ENCODE measurements at regions of chr22 and their contacts with region 1.

Region 1: DNA sequence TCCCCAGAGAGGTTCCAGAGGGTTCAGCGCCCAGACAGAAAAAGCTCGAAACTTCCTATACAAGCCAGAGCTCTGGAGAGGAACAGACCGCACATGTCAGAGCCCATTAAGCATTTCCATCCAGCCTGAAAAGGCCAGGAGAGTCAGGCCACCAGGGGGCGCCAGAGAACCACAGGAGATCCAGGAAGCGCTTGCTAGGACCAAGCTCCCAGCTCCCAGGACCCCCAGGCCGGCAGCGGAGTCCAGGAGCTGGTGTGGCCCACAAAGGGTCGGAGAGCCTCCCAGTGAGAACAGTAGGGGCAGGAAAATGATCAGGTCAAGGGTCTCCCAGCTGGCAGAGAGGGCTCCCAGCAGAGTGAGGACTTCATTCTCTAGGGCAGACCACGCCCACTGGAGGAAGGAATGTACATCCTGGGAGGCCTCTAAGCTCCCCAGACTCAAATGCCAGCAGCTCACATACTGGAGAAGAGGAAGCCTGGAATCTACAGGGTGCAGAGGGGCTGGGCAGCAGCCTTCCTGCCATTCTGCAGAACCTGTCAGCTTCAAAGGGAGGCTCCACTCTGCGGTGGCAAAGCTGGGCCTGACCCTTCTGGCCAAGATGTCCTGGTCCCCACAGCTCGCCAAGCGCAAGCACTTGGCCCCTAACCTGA is 2.1 kb upstream of the MEI1 start:
- DNase-seq: peak; percentile 85
- H3K4me3 ChIP-seq: peak overlapping the region in 1 of 2 experiments; percentile 43; a peak in 1 of 4 replicates
- H3K27ac ChIP-seq: no peak overlapping the region; a peak in 2 of 4 replicates
- H3K4me1 ChIP-seq: peaks cover 0 to 4% of the 10 kb centered on the region in 2 experiments; a peak in 1 of 4 replicates
- H3K27me3 ChIP-seq: no peaks in the 10 kb centered on the region
- CTCF ChIP-seq: peak; percentile 83
- EP300 ChIP-seq: no peak
- RAD21 ChIP-seq: peak; percentile 77

Region 2: GRCh38 chr22:41256254-41256897 is 440.9 kb before region 1 on chr22:
- CTCF ChIA-PET with region 1: no interaction called
- POLR2A ChIA-PET with region 1: no interaction called
- DNase-seq: no peak
- H3K4me3 ChIP-seq: no peak overlapping the region
- H3K27ac ChIP-seq: no peak overlapping the region
- H3K4me1 ChIP-seq: no peaks in the 10 kb centered on the region
- H3K27me3 ChIP-seq: no peaks in the 10 kb centered on the region
- CTCF ChIP-seq: no peak
- EP300 ChIP-seq: no peak
- RAD21 ChIP-seq: no peak

Region 3: DNA sequence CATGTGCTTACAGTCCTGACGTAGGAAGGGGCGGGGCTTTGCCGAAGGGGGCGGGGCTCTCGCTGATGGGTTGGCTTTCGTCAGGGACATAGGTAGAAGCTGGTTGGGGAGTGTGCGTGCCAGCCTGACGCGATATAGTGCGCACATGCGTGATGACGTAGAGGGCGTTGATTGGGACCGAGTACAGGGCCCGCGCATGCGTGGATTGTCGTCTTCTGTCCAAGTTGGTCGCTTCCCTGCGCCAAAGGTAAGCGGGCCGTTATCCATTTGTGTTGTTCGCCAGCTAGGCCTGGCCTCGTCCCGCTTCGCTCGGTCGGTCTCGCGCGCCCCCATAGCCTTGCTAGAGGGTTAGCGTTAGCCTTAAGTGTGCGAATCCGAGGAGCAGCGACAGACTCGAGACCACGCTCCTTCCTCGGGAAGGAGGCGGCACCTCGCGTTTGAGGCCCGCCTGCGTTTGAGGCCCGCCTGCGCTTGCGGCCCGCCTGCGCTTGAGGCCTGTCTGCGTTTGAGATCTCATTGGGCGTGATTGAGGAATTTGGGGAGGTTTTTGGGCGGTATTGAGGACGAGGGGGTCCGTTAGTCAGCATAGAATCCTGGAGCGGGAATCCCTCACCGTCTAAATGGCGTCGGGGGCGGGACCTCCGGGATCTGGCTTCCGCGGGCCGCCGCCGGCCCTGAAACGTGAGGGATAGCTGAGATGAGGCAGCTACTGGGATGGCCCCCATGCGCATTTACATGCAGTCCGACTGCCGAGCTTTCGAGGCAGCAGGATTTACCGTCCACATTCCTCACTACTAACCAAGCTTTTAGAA is 75.9 kb before region 1 on chr22 and contains the start of gene XRCC6:
- CTCF ChIA-PET with region 1: no interaction called
- POLR2A ChIA-PET with region 1: no interaction called
- DNase-seq: peak; percentile 96
- H3K4me3 ChIP-seq: peak within 1 kb of the TSS; percentile 78 to 89
- H3K27ac ChIP-seq: peak within 1 kb of the TSS; percentile 82 to 97
- H3K4me1 ChIP-seq: peaks cover 5% of the 10 kb centered on the region in 2 experiments; a peak in 3 of 4 replicates
- H3K27me3 ChIP-seq: no peaks in the 10 kb centered on the region
- CTCF ChIP-seq: no peak
- EP300 ChIP-seq: no peak
- RAD21 ChIP-seq: no peak
- polyA plus RNA-seq, gene XRCC6: 78.1 and 79.0 TPM in 2 replicates

Region 4: DNA sequence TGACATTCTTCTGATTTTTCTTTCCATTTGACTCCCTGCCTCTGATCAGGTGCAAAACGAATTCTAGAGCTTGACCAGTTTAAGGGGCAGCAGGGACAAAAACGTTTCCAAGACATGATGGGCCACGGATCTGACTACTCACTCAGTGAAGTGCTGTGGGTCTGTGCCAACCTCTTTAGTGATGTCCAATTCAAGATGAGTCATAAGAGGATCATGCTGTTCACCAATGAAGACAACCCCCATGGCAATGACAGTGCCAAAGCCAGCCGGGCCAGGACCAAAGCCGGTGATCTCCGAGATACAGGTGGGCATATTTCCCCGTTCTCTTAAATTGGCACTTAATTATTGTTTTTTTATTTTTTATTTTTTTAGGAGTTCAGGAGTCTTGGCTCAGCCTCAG is 60.8 kb before region 1 on chr22:
- CTCF ChIA-PET with region 1: no interaction called
- POLR2A ChIA-PET with region 1: no interaction called
- DNase-seq: no peak
- H3K4me3 ChIP-seq: no peak overlapping the region
- H3K27ac ChIP-seq: peak overlapping the region in 1 of 2 experiments; percentile 56; a peak in 1 of 4 replicates
- H3K4me1 ChIP-seq: no peaks in the 10 kb centered on the region
- H3K27me3 ChIP-seq: no peaks in the 10 kb centered on the region
- CTCF ChIP-seq: no peak
- EP300 ChIP-seq: no peak
- RAD21 ChIP-seq: no peak

Region 5: DNA sequence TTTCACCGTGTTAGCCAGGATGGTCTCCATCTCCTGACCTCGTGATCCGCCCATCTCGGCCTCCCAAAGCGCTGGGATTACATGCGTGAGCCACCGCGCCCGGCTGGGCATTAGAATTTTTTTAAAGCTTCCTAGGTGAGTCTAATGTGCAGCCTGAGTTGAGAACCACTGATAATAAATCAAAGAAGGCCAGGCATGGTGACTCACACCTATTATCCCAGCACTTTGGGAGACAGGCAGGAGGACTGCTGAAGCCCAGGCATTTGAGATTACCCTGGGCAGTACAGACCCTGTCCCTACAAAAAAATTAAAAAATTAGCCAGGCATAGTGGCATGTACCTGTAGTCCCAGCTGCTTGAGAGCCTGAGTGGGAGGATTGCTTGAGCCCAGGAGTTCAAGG is 15.8 kb after region 1 on chr22:
- CTCF ChIA-PET with region 1: interaction called, 18 read pairs
- POLR2A ChIA-PET with region 1: interaction called, 3 read pairs
- DNase-seq: no peak
- H3K4me3 ChIP-seq: no peak overlapping the region
- H3K27ac ChIP-seq: no peak overlapping the region
- H3K4me1 ChIP-seq: no peaks in the 10 kb centered on the region
- H3K27me3 ChIP-seq: no peaks in the 10 kb centered on the region
- CTCF ChIP-seq: no peak
- EP300 ChIP-seq: no peak
- RAD21 ChIP-seq: no peak

Region 6: GRCh38 chr22:41746567-41747400 is 49.5 kb after region 1 on chr22:
- CTCF ChIA-PET with region 1: interaction called, 16 read pairs
- POLR2A ChIA-PET with region 1: no interaction called
- DNase-seq: peak; percentile 55
- H3K4me3 ChIP-seq: peak overlapping the region in 1 of 2 experiments; percentile 19; a peak in 1 of 4 replicates
- H3K27ac ChIP-seq: no peak overlapping the region
- H3K4me1 ChIP-seq: no peaks in the 10 kb centered on the region
- H3K27me3 ChIP-seq: no peaks in the 10 kb centered on the region; the same call in 1 of the 2 replicates
- CTCF ChIP-seq: peak; percentile 55
- EP300 ChIP-seq: no peak
- RAD21 ChIP-seq: peak; percentile 65

Region 7: GRCh38 chr22:41800348-41801146 is 103.3 kb after region 1 on chr22 and contains the start of gene CCDC134:
- CTCF ChIA-PET with region 1: interaction called, 18 read pairs
- POLR2A ChIA-PET with region 1: interaction called, 4 read pairs
- DNase-seq: peak; percentile 93
- H3K4me3 ChIP-seq: peak within 1 kb of the TSS; percentile 71 to 72
- H3K27ac ChIP-seq: peak within 1 kb of the TSS; percentile 13 to 68; a peak in 2 of 4 replicates
- H3K4me1 ChIP-seq: peaks cover 0 to 9% of the 10 kb centered on the region in 2 experiments; a peak in 2 of 4 replicates
- H3K27me3 ChIP-seq: no peaks in the 10 kb centered on the region
- CTCF ChIP-seq: no peak
- EP300 ChIP-seq: no peak
- RAD21 ChIP-seq: no peak
- polyA plus RNA-seq, gene CCDC134: 1.8 and 2.0 TPM in 2 replicates

Region 8: DNA sequence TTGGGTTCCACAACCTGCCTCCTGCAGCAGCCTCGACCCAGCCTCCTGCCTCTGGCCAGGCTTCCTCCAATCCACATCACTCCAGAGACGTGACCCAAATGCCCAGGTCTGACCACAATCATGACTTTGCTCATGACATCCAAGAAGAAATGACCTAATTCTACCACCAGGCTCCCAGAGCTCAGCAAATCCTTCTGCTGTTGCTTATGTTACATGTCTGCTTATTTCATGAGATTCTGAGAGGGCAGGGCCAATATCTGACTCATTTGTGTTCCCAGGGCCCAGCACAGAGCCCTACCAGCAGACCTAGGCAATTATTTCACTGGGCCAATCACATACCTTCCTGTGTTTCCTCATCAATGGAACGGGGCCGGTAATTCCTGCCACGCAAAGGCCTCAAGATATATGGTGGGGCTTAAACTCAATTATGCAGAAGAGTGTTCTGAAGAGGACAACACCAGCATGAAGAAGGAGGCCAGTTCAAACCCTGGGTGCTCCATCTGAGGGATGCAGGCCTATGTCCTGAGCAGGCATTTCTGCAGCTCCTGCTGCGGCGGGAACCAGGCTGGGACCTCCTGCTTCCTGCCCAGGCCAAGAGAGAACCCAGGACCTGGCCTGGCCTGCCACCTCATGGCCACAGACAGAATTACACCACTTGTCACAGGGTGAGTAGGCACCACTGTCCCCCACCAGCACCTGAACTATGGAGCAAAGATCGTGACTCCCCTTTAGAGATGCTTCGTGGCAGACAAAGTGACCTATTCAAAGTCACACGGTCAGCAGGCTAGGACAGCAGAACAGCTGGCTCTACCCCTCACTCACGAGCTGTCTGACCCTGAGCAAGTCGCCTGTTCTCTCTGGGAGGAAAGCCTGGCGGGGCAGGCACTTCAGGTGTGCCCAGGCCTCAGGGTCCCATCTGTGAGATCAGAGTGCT is 243.8 kb after region 1 on chr22:
- CTCF ChIA-PET with region 1: interaction called, 46 read pairs
- POLR2A ChIA-PET with region 1: interaction called, 6 read pairs
- DNase-seq: peak; percentile 78
- H3K4me3 ChIP-seq: peak overlapping the region in 1 of 2 experiments; percentile 32; a peak in 1 of 4 replicates
- H3K27ac ChIP-seq: peak overlapping the region in 1 of 2 experiments; percentile 45; a peak in 2 of 4 replicates
- H3K4me1 ChIP-seq: peaks cover 0 to 11% of the 10 kb centered on the region in 2 experiments; a peak in 1 of 4 replicates
- H3K27me3 ChIP-seq: no peaks in the 10 kb centered on the region
- CTCF ChIP-seq: peak; percentile 65
- EP300 ChIP-seq: no peak
- RAD21 ChIP-seq: peak; percentile 87

Region 9: GRCh38 chr22:41946629-41947423 is 249.6 kb after region 1 on chr22 and contains the start of gene CENPM:
- CTCF ChIA-PET with region 1: interaction called, 46 read pairs
- POLR2A ChIA-PET with region 1: interaction called, 3 read pairs
- DNase-seq: peak; percentile 85
- H3K4me3 ChIP-seq: peak within 1 kb of the TSS; percentile 63 to 72
- H3K27ac ChIP-seq: peak within 1 kb of the TSS; percentile 28 to 56; a peak in 3 of 4 replicates
- H3K4me1 ChIP-seq: peaks cover 0 to 19% of the 10 kb centered on the region in 2 experiments; a peak in 1 of 4 replicates
- H3K27me3 ChIP-seq: no peaks in the 10 kb centered on the region
- CTCF ChIP-seq: no peak
- EP300 ChIP-seq: no peak
- RAD21 ChIP-seq: no peak
- polyA plus RNA-seq, gene CENPM: 8.1 and 15.6 TPM in 2 replicates

Region 10: DNA sequence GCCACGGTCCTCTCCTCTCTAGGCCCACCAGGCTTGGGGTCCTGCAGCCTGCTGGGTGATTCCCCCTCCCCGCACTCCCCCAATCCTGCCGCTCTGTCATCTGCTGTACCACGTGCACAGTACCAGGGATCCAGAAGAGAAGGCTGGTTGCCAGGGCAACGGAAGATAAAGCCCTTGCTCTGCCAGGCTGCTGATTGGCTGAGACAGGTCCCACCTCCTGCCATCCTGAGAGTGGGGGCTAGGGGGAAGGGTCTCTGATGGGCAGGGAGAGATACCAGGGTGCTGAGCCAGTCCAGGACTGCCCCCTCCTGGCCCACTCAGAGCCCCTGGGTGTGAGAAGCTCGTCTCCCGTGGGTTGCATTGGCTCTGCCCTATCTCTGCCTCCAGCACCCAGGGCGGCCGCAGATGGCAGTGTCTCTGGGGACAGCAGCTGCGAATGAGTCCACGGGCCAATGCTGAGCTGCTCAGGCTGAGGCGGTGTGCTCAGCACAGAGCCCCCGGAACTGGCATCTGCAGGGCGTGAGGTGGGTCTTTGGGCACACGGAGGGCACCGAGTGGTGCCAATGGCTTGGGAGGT is 254.7 kb after region 1 on chr22 and contains the start of gene SMIM45:
- CTCF ChIA-PET with region 1: interaction called, 17 read pairs
- POLR2A ChIA-PET with region 1: interaction called, 3 read pairs
- DNase-seq: peak; percentile 82
- H3K4me3 ChIP-seq: peak within 1 kb of the TSS in 1 of 2 experiments; percentile 34; a peak in 1 of 4 replicates
- H3K27ac ChIP-seq: peak within 1 kb of the TSS in 1 of 2 experiments; percentile 76; a peak in 2 of 4 replicates
- H3K4me1 ChIP-seq: peaks cover 0 to 21% of the 10 kb centered on the region in 2 experiments; a peak in 1 of 4 replicates
- H3K27me3 ChIP-seq: no peaks in the 10 kb centered on the region
- CTCF ChIP-seq: no peak
- EP300 ChIP-seq: peak in 1 of 2 experiments; percentile 26; a peak in 1 of 4 replicates
- RAD21 ChIP-seq: peak; percentile 52

Region 11: DNA sequence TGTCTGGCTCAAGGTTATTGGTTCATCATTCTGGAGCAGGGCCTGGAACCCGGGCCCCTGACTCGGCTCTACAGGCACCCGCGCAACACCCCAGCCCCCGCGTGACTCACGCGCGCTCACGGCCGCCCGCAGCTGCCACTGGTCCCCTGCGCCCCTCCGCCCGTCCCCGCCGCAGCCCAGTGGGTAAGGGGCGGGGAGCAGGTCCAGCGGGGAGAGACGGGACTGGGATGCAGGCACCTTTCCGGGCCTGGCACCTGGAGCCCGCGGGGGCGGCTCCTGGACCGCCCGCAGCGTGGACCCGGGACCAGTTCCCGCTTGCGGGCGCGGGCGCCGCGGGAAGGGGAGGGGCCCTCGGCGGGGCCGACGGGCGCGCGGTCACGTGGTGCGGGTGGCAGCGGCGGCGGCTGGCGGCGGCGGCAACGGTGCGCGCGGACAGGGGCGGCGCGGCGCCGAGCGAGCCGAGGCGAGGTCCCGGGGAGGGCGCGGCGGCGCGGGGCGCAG is 279.2 kb after region 1 on chr22:
- CTCF ChIA-PET with region 1: no interaction called
- POLR2A ChIA-PET with region 1: no interaction called
- DNase-seq: peak; percentile 84
- H3K4me3 ChIP-seq: peak overlapping the region; percentile 3 to 45; a peak in 3 of 4 replicates
- H3K27ac ChIP-seq: no peak overlapping the region
- H3K4me1 ChIP-seq: peaks cover 0 to 12% of the 10 kb centered on the region in 2 experiments; a peak in 1 of 4 replicates
- H3K27me3 ChIP-seq: no peaks in the 10 kb centered on the region
- CTCF ChIP-seq: no peak
- EP300 ChIP-seq: no peak
- RAD21 ChIP-seq: no peak